Activated CD8-positive, alpha-beta memory T cell treated with anti-CD3 and anti-CD28 coated beads, Interleukin-2, amount 10 ng/mL, durations not matched to agents 7 days and 5 days (primary cell): ENCODE measurements at regions of chr1 and their contacts with region 1.

Region 1: DNA sequence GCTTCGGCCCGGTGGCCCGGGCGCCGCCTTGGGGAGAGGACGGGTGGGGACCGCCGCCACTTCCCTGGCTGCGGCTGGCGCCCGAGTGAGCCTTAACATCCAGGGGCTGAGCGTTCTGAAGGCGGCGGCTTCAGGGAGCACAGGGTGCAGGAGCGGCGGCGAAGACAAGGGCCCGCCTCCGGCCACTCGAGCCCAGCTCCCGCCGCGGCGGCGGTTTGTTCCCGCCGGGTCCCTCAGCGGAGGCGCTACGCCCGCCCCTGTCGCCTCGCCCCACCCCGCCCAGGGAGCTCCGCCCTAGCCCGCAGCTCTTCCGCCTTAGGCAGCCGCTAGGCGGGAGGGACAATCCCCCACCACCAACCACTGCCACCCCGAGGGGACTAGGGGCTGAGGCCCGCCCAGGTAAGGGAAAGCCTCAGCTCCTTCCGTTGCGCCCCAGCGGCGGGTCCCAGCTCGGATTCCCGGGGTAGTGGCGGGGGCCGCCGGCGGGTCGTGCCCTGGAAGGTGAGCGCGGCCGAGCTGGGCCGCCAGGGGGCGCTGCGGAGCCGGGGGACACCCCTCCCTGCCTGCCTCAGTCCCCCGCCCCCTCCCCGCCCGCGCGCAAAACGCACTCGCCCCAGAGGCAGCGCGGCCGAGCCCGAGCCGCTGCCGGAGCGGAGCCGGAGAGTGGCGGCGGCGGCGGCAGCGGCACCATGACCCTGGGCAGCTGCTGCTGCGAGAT is at the start of gene FOXD2:
- DNase-seq: peak; percentile 95
- ATAC-seq: peak; percentile 88
- H3K4me3 Mint-ChIP-seq: peak within 1 kb of the TSS; percentile 95
- H3K27ac Mint-ChIP-seq: peak within 1 kb of the TSS; percentile 93
- H3K4me1 Mint-ChIP-seq: peaks cover 30% of the 10 kb centered on the region
- H3K27me3 Mint-ChIP-seq: peaks cover 15% of the 10 kb centered on the region
- total RNA-seq, gene FOXD2: 0.23 to 0.53 TPM

Region 2: DNA sequence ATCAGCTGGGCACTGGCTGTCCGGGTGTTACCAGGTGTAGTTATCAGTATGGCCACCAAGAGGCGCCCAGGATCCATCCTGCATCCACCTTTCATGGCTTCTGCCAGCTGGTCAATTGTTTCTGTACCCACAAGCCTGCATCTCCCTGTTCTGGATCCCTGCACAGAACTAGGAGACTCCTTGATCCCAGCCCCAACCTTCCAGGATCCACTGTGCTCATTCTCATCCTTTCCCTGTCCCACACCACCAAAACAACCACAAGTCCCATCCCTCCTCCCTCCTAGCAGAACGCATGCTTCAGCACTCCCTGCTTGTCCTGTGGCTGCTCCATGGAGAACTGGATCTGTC is 48.7 kb before region 1 on chr1:
- CTCF ChIA-PET with region 1: interaction called, 10 read pairs
- DNase-seq: peak; percentile 61
- ATAC-seq: peak; percentile 69
- H3K4me3 Mint-ChIP-seq: no peak overlapping the region
- H3K27ac Mint-ChIP-seq: no peak overlapping the region
- H3K4me1 Mint-ChIP-seq: no peaks in the 10 kb centered on the region
- H3K27me3 Mint-ChIP-seq: peaks cover 10% of the 10 kb centered on the region

Region 3: GRCh38 chr1:47449822-47450552 is 12.4 kb after region 1 on chr1:
- CTCF ChIA-PET with region 1: interaction called, 39 read pairs
- DNase-seq: no peak
- ATAC-seq: no peak
- H3K4me3 Mint-ChIP-seq: no peak overlapping the region
- H3K27ac Mint-ChIP-seq: no peak overlapping the region
- H3K4me1 Mint-ChIP-seq: peaks cover 4% of the 10 kb centered on the region
- H3K27me3 Mint-ChIP-seq: peaks cover 53% of the 10 kb centered on the region

Region 4: GRCh38 chr1:47710329-47711071 is 272.9 kb after region 1 on chr1:
- CTCF ChIA-PET with region 1: interaction called, 83 read pairs
- DNase-seq: peak; percentile 70
- ATAC-seq: peak; percentile 82
- H3K4me3 Mint-ChIP-seq: no peak overlapping the region
- H3K27ac Mint-ChIP-seq: no peak overlapping the region
- H3K4me1 Mint-ChIP-seq: peaks cover 5% of the 10 kb centered on the region
- H3K27me3 Mint-ChIP-seq: peaks cover 80% of the 10 kb centered on the region

Region 5: GRCh38 chr1:47725992-47726855 is 288.6 kb after region 1 on chr1:
- CTCF ChIA-PET with region 1: interaction called, 15 read pairs
- DNase-seq: peak; percentile 77
- ATAC-seq: peak; percentile 92
- H3K4me3 Mint-ChIP-seq: no peak overlapping the region
- H3K27ac Mint-ChIP-seq: no peak overlapping the region
- H3K4me1 Mint-ChIP-seq: peaks cover 3% of the 10 kb centered on the region
- H3K27me3 Mint-ChIP-seq: peaks cover 53% of the 10 kb centered on the region